ENCODE measurements at regions of chr5 and their contacts with region 1.

Region 1: DNA sequence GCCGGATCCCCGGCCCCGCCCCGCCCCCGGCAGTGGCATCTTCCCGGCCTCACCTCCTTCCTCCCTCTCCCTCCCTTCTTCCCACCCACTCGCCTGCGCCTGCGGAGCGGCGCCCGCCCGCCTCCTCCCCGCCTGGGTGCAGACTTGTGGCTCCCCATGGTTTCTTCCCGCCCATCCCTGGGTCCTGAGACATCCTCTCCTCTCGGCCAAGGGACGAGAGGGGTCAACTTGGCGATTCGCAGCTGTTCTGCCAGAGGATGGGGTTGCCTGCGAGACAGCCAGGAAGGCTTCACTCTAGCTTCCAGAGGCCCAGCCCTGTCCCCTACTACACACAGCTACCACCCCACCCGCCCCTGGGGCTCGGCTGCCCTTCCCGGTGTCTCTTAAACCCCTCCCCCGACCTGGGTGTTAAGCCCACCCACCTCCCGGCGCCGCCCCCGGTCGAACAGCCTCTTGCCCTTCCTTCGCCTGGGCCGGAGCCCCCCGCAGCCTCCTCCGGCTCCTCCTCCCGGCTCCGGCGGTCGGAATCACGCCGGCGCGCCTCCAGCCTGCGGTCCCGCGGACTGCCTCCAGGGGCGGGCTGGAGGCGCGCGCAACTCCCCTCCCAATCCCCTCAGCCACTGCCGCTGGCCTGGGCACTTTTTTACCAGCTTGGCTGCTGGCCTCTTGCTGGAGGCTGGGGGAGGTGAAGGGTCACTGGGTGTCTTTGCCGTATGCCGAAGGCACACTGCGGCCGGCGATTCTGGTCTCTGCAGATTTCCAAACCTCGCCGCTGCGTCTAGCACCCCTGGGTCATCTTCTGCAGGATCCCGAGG is 1.9 kb downstream of the JADE2 start:
- DNase-seq: no peak
- ATAC-seq: peak; percentile 74
- H3K4me3 ChIP-seq: peak overlapping the region; percentile 74 to 85
- H3K27ac ChIP-seq: peak overlapping the region; percentile 94
- H3K4me1 ChIP-seq: peaks cover 62% of the 10 kb centered on the region
- H3K27me3 ChIP-seq: no peaks in the 10 kb centered on the region
- CTCF ChIP-seq: peak; percentile 94

Region 2: DNA sequence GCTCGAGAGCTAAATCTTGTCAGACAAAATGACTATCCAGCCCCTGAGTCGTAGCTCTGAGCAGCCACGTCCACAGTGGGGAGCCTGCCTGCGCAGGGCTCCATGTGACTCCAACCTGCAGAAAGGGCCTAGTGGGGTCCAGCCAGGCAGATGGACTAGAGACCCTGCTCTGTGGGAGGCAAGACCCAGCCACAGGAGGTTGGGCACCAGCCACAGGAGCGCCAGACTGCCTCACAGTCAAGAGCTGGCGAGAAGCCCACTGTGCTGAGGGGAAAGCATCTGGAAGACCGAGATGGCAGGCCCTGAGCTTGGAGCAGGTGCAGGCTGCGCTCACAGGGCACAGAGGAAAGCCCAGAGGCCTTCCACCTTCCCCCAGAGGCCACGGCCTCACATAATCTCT is 620.3 kb before region 1 on chr5:
- CTCF ChIA-PET with region 1: no interaction called
- POLR2A ChIA-PET with region 1: no interaction called
- in situ Hi-C with region 1: no loop called
- intact Hi-C with region 1: no loop called
- DNase-seq: no peak
- ATAC-seq: no peak; the same call in 1 of the 2 replicates
- H3K4me3 ChIP-seq: no peak overlapping the region
- H3K27ac ChIP-seq: no peak overlapping the region
- H3K4me1 ChIP-seq: no peaks in the 10 kb centered on the region
- H3K27me3 ChIP-seq: no peaks in the 10 kb centered on the region
- CTCF ChIP-seq: no peak

Region 3: DNA sequence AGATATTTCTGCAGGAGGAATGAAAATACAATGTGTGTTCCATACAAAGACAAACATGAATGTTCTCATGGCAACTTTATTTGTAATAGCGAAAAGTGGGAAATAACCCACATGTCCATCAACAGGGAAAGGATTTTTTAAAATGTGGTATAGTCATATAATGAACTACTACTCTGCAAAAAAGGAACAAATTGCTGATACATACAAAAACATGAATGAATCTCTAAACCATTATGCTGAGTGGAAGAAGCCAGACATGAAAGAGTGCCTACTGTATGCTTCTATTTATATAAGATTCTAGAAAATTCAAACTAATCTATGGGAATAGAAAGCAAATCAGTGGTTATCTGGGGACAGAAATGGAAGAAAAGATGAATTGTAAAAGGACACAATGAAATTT is 212.9 kb before region 1 on chr5:
- CTCF ChIA-PET with region 1: interaction called, 12 read pairs
- POLR2A ChIA-PET with region 1: no interaction called
- in situ Hi-C with region 1: no loop called
- intact Hi-C with region 1: no loop called
- DNase-seq: no peak
- ATAC-seq: no peak
- H3K4me3 ChIP-seq: no peak overlapping the region
- H3K27ac ChIP-seq: no peak overlapping the region
- H3K4me1 ChIP-seq: no peaks in the 10 kb centered on the region
- H3K27me3 ChIP-seq: no peaks in the 10 kb centered on the region
- CTCF ChIP-seq: no peak

Region 4: DNA sequence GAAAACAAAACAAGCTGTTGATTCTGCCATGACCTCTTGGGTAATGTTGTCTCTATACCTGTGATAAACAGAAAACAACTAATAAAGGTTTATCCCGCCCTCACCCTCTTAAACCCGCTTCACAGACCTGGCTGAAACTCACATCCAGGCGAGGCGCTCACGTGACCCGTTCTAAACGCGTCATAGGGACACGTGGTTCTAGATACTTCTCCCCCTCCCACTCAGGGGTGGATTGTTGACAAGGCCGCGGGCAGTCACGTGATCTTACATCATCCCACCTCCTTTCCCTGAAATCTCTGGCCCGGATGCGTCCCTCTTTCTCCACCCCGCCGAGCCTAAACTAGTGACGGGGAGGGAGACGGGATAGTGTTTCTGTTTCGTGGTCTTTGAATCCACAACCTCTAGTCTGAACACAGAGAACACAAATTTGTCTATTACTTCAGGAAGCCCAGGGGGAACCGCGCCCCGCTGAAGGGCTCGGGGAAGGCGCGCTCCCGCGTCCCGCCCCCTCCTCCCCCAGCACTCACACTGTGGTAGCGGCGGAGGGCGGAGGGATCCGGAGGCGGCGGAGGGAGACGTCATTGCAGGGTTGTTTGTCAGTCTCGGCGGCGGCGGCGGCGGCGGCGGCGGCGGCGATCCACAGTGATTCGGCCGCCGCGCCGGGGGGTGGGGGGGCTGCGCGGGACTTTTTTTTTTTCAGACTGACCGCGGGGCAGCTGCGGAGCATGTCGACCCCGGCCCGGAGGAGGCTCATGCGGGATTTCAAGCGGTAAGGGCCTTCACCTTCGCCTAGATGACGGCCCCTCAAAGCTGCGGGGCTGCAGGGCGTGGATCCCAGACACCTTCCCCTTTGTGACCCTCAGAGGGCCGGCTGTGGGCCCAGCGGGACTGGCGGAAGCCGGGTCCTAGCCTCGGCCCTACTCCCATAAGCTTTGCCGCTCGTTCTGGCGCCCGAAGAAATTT is 156.2 kb before region 1 on chr5 and contains the start of gene UBE2B:
- CTCF ChIA-PET with region 1: no interaction called
- POLR2A ChIA-PET with region 1: interaction called, 6 read pairs
- in situ Hi-C with region 1: no loop called
- intact Hi-C with region 1: loop called (anchors 5 kb)
- DNase-seq: peak; percentile 98
- ATAC-seq: peak; percentile 89
- H3K4me3 ChIP-seq: peak within 1 kb of the TSS; percentile 81 to 98
- H3K27ac ChIP-seq: peak within 1 kb of the TSS; percentile 96
- H3K4me1 ChIP-seq: peaks cover 12% of the 10 kb centered on the region
- H3K27me3 ChIP-seq: no peaks in the 10 kb centered on the region
- CTCF ChIP-seq: no peak
- total RNA-seq, gene UBE2B: 97.8 TPM

Region 5: GRCh38 chr5:134411546-134412266 is 115.6 kb before region 1 on chr5 and contains the start of gene CDKN2AIPNL:
- CTCF ChIA-PET with region 1: interaction called, 9 read pairs
- POLR2A ChIA-PET with region 1: interaction called, 3 read pairs
- in situ Hi-C with region 1: no loop called
- intact Hi-C with region 1: loop called (anchors 5 kb)
- DNase-seq: peak; percentile 35
- ATAC-seq: peak; percentile 100
- H3K4me3 ChIP-seq: peak within 1 kb of the TSS; percentile 58 to 89
- H3K27ac ChIP-seq: peak within 1 kb of the TSS; percentile 94
- H3K4me1 ChIP-seq: peaks cover 25% of the 10 kb centered on the region
- H3K27me3 ChIP-seq: no peaks in the 10 kb centered on the region
- CTCF ChIP-seq: peak; percentile 96
- total RNA-seq, gene CDKN2AIPNL: 43.6 TPM

Region 6: DNA sequence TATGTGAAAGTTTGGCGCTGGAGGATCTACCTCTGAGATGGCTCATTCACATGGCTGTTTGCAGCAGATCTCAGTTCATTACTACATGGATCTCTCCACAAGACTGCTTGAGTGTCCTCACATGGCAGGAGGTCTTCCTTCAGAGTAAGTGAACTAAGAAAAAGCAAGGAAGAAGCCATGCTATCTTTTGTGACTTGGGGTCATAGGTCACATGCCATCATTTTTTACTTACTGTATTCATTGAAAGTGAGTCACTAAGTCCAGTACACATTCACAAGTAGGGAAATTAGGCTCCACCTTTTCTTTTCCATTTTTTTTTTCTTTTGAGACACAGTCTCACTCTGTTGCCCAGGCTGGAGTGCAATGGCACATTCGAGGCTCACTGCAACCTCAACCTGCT is 107.0 kb before region 1 on chr5:
- CTCF ChIA-PET with region 1: no interaction called
- POLR2A ChIA-PET with region 1: interaction called, 11 read pairs
- in situ Hi-C with region 1: no loop called
- intact Hi-C with region 1: no loop called
- DNase-seq: no peak
- ATAC-seq: no peak
- H3K4me3 ChIP-seq: no peak overlapping the region
- H3K27ac ChIP-seq: no peak overlapping the region
- H3K4me1 ChIP-seq: no peaks in the 10 kb centered on the region
- H3K27me3 ChIP-seq: no peaks in the 10 kb centered on the region
- CTCF ChIP-seq: no peak

Region 7: DNA sequence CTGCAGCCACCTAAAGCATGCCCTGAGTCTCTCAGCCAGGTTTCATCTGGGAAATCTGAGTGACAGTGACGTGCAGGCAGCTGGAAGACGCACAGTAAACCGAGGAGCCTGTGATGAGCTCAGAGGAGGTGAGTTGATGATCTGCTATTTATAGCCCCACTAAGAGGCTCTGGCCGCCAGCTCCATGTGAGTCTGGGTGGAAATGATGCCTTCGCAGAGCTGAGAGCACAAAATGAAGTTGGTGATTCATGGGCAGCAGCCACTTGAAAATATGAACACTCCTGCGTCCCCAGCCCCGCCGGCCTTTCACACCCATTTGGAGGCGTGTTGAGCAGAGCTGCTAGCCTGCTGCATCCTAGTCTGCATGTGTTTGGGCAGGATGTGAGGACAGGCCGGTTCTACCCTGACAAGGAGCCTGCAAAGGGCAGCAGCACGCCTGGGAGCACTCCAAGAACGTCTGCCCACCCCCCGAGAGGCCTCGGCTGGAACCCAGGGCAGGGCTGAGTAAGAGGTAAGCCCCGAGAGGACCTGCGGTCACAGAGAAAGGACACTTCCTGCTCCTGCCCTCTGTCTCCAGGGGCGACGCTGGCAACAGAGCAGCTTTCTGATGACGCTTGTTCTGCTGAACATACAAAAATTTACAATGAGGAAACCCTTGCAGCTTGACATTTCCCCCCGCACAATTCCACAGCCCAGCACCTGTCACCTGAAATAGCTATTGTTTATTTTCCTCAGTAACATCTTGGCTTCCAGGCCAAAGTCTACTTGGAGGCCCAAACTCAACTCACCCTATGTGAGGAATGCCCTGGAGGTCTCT is 90.6 kb before region 1 on chr5:
- CTCF ChIA-PET with region 1: no interaction called
- POLR2A ChIA-PET with region 1: no interaction called
- in situ Hi-C with region 1: no loop called
- intact Hi-C with region 1: no loop called
- DNase-seq: no peak
- ATAC-seq: peak; percentile 78
- H3K4me3 ChIP-seq: peak overlapping the region in 1 of 2 experiments; percentile 32; a peak in 1 of 4 replicates
- H3K27ac ChIP-seq: peak overlapping the region; percentile 48
- H3K4me1 ChIP-seq: peaks cover 29% of the 10 kb centered on the region
- H3K27me3 ChIP-seq: no peaks in the 10 kb centered on the region
- CTCF ChIP-seq: no peak

Region 8: GRCh38 chr5:134511788-134512650 is 15.3 kb before region 1 on chr5:
- CTCF ChIA-PET with region 1: interaction called, 6 read pairs
- POLR2A ChIA-PET with region 1: interaction called, 10 read pairs
- in situ Hi-C with region 1: no loop called
- intact Hi-C with region 1: no loop called
- DNase-seq: no peak
- ATAC-seq: peak; percentile 51
- H3K4me3 ChIP-seq: no peak overlapping the region
- H3K27ac ChIP-seq: peak overlapping the region; percentile 97
- H3K4me1 ChIP-seq: peaks cover 55% of the 10 kb centered on the region
- H3K27me3 ChIP-seq: no peaks in the 10 kb centered on the region
- CTCF ChIP-seq: no peak

Region 9: DNA sequence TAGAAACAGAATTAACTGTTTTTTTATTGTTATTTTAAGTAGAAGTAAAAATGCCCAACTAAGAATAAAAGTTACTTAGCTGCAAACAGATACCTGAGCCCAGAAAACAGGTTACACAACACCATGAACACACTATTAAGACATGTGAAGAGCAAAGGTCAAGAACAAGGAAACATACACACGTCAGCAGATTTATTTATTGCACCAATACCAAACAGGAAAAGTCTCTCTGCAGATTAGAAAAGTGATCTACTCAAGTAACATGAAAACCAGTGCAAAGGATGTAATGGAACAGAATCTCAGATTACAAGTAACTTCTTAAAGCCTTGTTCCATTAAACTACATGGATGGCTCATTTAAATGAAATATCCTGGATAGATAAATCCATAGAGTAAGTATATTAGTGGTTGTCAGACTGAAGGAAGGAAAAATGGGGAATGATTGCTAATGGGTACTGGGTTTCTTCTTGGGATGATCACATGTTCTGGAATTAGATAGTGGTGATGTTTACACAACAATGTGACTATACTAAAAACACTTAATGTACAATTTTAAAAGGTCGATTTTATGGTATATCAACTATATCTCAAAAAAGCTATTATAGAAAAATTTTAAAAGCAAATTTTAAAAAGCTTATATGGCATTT is 99.1 kb after region 1 on chr5:
- CTCF ChIA-PET with region 1: no interaction called
- POLR2A ChIA-PET with region 1: interaction called, 11 read pairs
- in situ Hi-C with region 1: no loop called
- intact Hi-C with region 1: no loop called
- DNase-seq: no peak
- ATAC-seq: no peak
- H3K4me3 ChIP-seq: no peak overlapping the region
- H3K27ac ChIP-seq: no peak overlapping the region
- H3K4me1 ChIP-seq: no peaks in the 10 kb centered on the region
- H3K27me3 ChIP-seq: no peaks in the 10 kb centered on the region
- CTCF ChIP-seq: no peak

Region 10: GRCh38 chr5:134662971-134663370 is 135.6 kb after region 1 on chr5:
- CTCF ChIA-PET with region 1: no interaction called
- POLR2A ChIA-PET with region 1: no interaction called
- in situ Hi-C with region 1: no loop called
- intact Hi-C with region 1: no loop called
- DNase-seq: no peak
- ATAC-seq: no peak
- H3K4me3 ChIP-seq: no peak overlapping the region
- H3K27ac ChIP-seq: no peak overlapping the region
- H3K4me1 ChIP-seq: no peaks in the 10 kb centered on the region
- H3K27me3 ChIP-seq: no peaks in the 10 kb centered on the region
- CTCF ChIP-seq: no peak